Natural killer cell (primary cell): ENCODE measurements at regions of chr13 and their contacts with region 1.

Region 1: DNA sequence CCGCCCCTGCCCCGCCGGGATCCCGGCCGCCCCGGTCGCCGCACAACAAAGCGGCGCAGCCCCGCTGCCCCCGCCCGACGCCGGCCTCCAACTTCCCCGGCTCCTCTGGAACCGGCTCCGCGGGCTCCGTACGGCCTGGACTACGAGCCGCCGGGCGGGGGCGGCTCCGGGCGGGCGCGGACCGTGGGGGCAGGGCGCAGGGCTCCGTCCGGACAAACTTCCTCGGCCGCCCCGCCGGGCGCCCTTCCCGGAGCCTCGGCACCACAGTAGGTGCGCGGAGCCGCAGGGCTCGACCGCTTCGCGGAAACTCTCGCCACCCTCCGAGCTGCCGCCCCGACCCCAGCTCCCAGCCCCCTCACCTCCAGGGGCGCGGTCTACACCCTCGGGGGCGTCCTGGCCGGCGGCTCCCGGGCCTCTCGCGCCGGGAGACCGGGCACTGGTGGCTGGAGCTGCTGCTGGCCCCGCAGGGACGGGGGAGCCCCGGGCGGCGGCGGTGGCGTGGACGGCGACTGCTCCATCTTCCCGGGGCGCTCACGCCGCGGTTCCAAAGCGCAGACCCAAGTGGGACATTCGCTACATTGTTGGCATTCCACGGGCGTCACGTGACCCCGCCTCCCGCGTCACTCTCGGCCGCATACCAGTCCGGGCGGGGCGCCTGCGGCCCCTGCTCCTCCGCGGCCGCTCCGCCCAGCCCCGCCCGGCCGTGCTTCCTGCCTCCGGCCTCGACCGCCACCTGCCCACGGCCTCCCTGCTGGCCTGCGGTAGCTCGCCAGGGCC is at the start of gene LATS2:
- DNase-seq: peak; percentile 74 to 89
- ATAC-seq: peak; percentile 87 to 94 (median 90)
- H3K4me3 ChIP-seq: peak within 1 kb of the TSS; percentile 50
- H3K4me3 Mint-ChIP-seq: peak within 1 kb of the TSS; percentile 86
- H3K27ac ChIP-seq: peak within 1 kb of the TSS; percentile 75
- H3K27ac Mint-ChIP-seq: peak within 1 kb of the TSS; percentile 83 to 89
- H3K4me1 ChIP-seq: peaks cover 19% of the 10 kb centered on the region
- H3K4me1 Mint-ChIP-seq: peaks cover 14 to 26% of the 10 kb centered on the region in 2 donors
- H3K27me3 ChIP-seq: no peaks in the 10 kb centered on the region
- H3K27me3 Mint-ChIP-seq: no peaks in the 10 kb centered on the region
- CTCF ChIP-seq: no peak
- total RNA-seq, gene LATS2: 28.8 to 34.8 (median 29.0) TPM

Region 2: DNA sequence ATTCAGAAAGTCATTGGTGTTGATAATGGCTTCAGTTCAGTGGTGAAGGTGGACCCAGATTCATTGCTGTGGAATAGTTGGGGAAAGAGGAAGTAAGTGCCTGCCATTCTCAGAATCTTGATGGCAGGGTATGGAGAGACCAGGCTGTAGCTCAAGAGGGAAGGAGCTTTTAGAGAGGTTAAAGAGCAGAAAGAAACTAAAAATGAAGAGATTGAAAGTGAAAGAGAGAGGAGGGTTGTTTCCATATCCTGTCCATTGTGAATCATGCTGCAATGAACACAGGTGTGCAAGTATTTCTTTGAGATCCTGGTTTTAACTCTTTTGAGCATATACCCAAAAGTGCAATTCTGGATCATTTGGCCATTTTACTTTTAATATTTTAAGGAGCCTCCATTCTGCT is 841.6 kb before region 1 on chr13:
- intact Hi-C with region 1: no loop called
- DNase-seq: no peak
- ATAC-seq: peak in 1 of 3 donors; percentile 35
- H3K4me3 ChIP-seq: no peak overlapping the region
- H3K4me3 Mint-ChIP-seq: no peak overlapping the region
- H3K27ac ChIP-seq: no peak overlapping the region
- H3K27ac Mint-ChIP-seq: no peak overlapping the region
- H3K4me1 ChIP-seq: no peaks in the 10 kb centered on the region
- H3K4me1 Mint-ChIP-seq: peaks cover 5% of the 10 kb centered on the region in 2 donors
- H3K27me3 ChIP-seq: peaks cover 5% of the 10 kb centered on the region
- H3K27me3 Mint-ChIP-seq: peaks cover 9 to 12% of the 10 kb centered on the region in 2 donors
- CTCF ChIP-seq: no peak

Region 3: GRCh38 chr13:21075011-21075898 is 14.1 kb after region 1 on chr13:
- intact Hi-C with region 1: loop called (anchors 1 kb)
- DNase-seq: peak; percentile 44 to 53
- ATAC-seq: peak; percentile 63 to 71 (median 70)
- H3K4me3 ChIP-seq: peak overlapping the region; percentile 47
- H3K4me3 Mint-ChIP-seq: peak overlapping the region; percentile 85
- H3K27ac ChIP-seq: peak overlapping the region; percentile 74
- H3K27ac Mint-ChIP-seq: peak overlapping the region; percentile 89 to 95
- H3K4me1 ChIP-seq: peaks cover 35% of the 10 kb centered on the region
- H3K4me1 Mint-ChIP-seq: peaks cover 18 to 22% of the 10 kb centered on the region in 2 donors
- H3K27me3 ChIP-seq: no peaks in the 10 kb centered on the region
- H3K27me3 Mint-ChIP-seq: peaks cover 0 to 4% of the 10 kb centered on the region in 2 donors
- CTCF ChIP-seq: no peak